Naive thymus-derived CD4-positive, alpha-beta T cell (primary cell): ENCODE measurements at regions of chr20 and their contacts with region 1.

Region 1: DNA sequence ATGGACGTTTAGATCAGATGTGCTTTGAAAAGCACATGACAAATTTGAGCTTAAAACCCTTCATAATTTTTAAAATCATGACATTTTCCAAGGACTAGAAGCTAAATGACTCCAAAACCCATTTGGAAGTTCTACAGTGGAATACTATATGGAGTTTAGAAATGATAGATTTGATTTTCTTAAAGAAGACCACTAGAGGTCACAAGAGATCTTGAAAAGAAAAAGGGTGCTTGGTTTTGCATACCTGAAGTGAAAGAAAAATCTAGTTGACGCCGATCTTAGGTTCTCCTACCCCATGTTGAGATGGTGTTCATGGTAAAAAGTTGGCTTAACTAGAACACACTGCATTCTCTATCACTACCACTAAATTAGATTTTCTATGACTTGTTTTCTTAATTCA is 31.5 kb downstream of the CFAP61 start:
- DNase-seq: peak in 6 of 9 donors; percentile 4 to 64 (median 44)
- ATAC-seq: peak; percentile 74
- H3K4me3 ChIP-seq: no peak overlapping the region
- H3K4me3 Mint-ChIP-seq: peak overlapping the region in 7 of 10 donors; percentile 46 to 86 (median 72)
- H3K27ac ChIP-seq: no peak overlapping the region
- H3K27ac Mint-ChIP-seq: peak overlapping the region in 6 of 9 donors; percentile 23 to 80 (median 52)
- H3K4me1 ChIP-seq: no peaks in the 10 kb centered on the region
- H3K4me1 Mint-ChIP-seq: peaks cover 0 to 9% (median 8%) of the 10 kb centered on the region in 7 donors
- H3K27me3 ChIP-seq: no peaks in the 10 kb centered on the region
- H3K27me3 Mint-ChIP-seq: peaks cover 0 to 16% (median 9%) of the 10 kb centered on the region in 5 donors

Region 2: GRCh38 chr20:20237093-20237959 is 153.5 kb after region 1 on chr20:
- CTCF ChIA-PET with region 1: no interaction called
- POLR2A ChIA-PET with region 1: no interaction called
- intact Hi-C with region 1: loop called in 1 of 2 experiments (anchors 1 kb)
- DNase-seq: peak in 4 of 9 donors; percentile 4 to 26 (median 6)
- ATAC-seq: peak; percentile 74
- H3K4me3 ChIP-seq: no peak overlapping the region
- H3K4me3 Mint-ChIP-seq: no peak overlapping the region
- H3K27ac ChIP-seq: no peak overlapping the region
- H3K27ac Mint-ChIP-seq: no peak overlapping the region
- H3K4me1 ChIP-seq: no peaks in the 10 kb centered on the region
- H3K4me1 Mint-ChIP-seq: peaks cover 0 to 4% (median 0%) of the 10 kb centered on the region in 7 donors
- H3K27me3 ChIP-seq: no peaks in the 10 kb centered on the region
- H3K27me3 Mint-ChIP-seq: peaks cover 0 to 18% (median 3%) of the 10 kb centered on the region in 5 donors

Region 3: GRCh38 chr20:20568604-20569205 is 484.9 kb after region 1 on chr20:
- CTCF ChIA-PET with region 1: no interaction called
- POLR2A ChIA-PET with region 1: no interaction called
- intact Hi-C with region 1: loop called in 1 of 2 experiments (anchors 1 kb)
- DNase-seq: peak in 5 of 9 donors; percentile 1 to 29 (median 7)
- ATAC-seq: no peak
- H3K4me3 ChIP-seq: no peak overlapping the region
- H3K4me3 Mint-ChIP-seq: no peak overlapping the region
- H3K27ac ChIP-seq: no peak overlapping the region
- H3K27ac Mint-ChIP-seq: no peak overlapping the region
- H3K4me1 ChIP-seq: no peaks in the 10 kb centered on the region
- H3K4me1 Mint-ChIP-seq: no peaks in the 10 kb centered on the region
- H3K27me3 ChIP-seq: no peaks in the 10 kb centered on the region
- H3K27me3 Mint-ChIP-seq: no peaks in the 10 kb centered on the region

Region 4: GRCh38 chr20:20593447-20594170 is 509.8 kb after region 1 on chr20:
- CTCF ChIA-PET with region 1: interaction called, 3 read pairs
- POLR2A ChIA-PET with region 1: no interaction called
- intact Hi-C with region 1: loop called (anchors 1 kb)
- DNase-seq: no peak
- ATAC-seq: no peak
- H3K4me3 ChIP-seq: no peak overlapping the region
- H3K4me3 Mint-ChIP-seq: no peak overlapping the region
- H3K27ac ChIP-seq: no peak overlapping the region
- H3K27ac Mint-ChIP-seq: no peak overlapping the region
- H3K4me1 ChIP-seq: no peaks in the 10 kb centered on the region
- H3K4me1 Mint-ChIP-seq: peaks cover 0 to 4% (median 0%) of the 10 kb centered on the region in 7 donors
- H3K27me3 ChIP-seq: no peaks in the 10 kb centered on the region
- H3K27me3 Mint-ChIP-seq: no peaks in the 10 kb centered on the region

Region 5: GRCh38 chr20:20824924-20825584 is 741.2 kb after region 1 on chr20:
- CTCF ChIA-PET with region 1: no interaction called
- POLR2A ChIA-PET with region 1: no interaction called
- intact Hi-C with region 1: loop called in 1 of 2 experiments (anchors 2 kb)
- DNase-seq: peak in 8 of 9 donors; percentile 19 to 52 (median 36)
- ATAC-seq: peak; percentile 68
- H3K4me3 ChIP-seq: no peak overlapping the region
- H3K4me3 Mint-ChIP-seq: peak overlapping the region in 1 of 10 donors; percentile 5
- H3K27ac ChIP-seq: no peak overlapping the region
- H3K27ac Mint-ChIP-seq: no peak overlapping the region
- H3K4me1 ChIP-seq: no peaks in the 10 kb centered on the region
- H3K4me1 Mint-ChIP-seq: peaks cover 0 to 7% (median 0%) of the 10 kb centered on the region in 7 donors
- H3K27me3 ChIP-seq: no peaks in the 10 kb centered on the region
- H3K27me3 Mint-ChIP-seq: peaks cover 2 to 30% (median 20%) of the 10 kb centered on the region in 5 donors